Activated T-helper 2 cell treated with anti-CD3 and anti-CD28 coated beads, Interferon-gamma antibody, Interleukin-2, Interleukin-4, amounts not matched to agents 10 μg/mL and 5 μg/mL and 100 μg/mL, durations not matched to agents 14 hours and 24 hours and 36 hours (primary cell): ENCODE measurements at regions of chr11 and their contacts with region 1.

Region 1: GRCh38 chr11:118448294-118448693 is 12.0 kb downstream of the KMT2A start:
- DNase-seq: no peak
- H3K4me3 Mint-ChIP-seq: no peak overlapping the region
- H3K27ac Mint-ChIP-seq: peak overlapping the region; percentile 9
- H3K4me1 Mint-ChIP-seq: peaks cover 56% of the 10 kb centered on the region
- H3K27me3 Mint-ChIP-seq: no peaks in the 10 kb centered on the region

Region 2: GRCh38 chr11:118415739-118416284 is 32.5 kb before region 1 on chr11:
- intact Hi-C with region 1: loop called (anchors 2 kb)
- DNase-seq: peak; percentile 32
- H3K4me3 Mint-ChIP-seq: no peak overlapping the region
- H3K27ac Mint-ChIP-seq: no peak overlapping the region
- H3K4me1 Mint-ChIP-seq: peaks cover 3% of the 10 kb centered on the region
- H3K27me3 Mint-ChIP-seq: no peaks in the 10 kb centered on the region

Region 3: GRCh38 chr11:118471030-118471429 is 22.7 kb after region 1 on chr11:
- intact Hi-C with region 1: loop called (anchors 2 kb)
- DNase-seq: no peak
- H3K4me3 Mint-ChIP-seq: no peak overlapping the region
- H3K27ac Mint-ChIP-seq: no peak overlapping the region
- H3K4me1 Mint-ChIP-seq: peaks cover 13% of the 10 kb centered on the region
- H3K27me3 Mint-ChIP-seq: no peaks in the 10 kb centered on the region